CD4-positive, alpha-beta T cell (primary cell): ENCODE measurements at regions of chr4 and their contacts with region 1.

Region 1: DNA sequence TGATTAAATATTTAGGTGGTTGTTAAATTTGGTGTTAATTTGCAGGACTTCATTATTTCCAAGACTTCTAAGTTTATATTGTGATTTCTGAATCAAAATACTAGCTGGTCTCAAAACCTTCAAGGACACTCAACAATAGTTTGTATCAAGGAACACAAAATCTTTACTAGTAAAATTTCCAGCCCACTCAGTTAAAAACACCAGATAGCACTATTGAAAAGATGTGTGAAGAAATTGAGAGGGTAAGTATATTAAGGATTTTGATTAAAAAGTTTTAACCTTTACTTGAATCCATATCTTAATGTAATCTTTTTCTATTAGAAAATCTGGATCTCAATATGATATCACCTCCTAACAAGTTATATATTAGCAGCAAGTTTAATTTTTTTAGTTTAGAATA is 89.3 kb upstream of the UGT8 start:
- DNase-seq: no peak
- ATAC-seq: no peak
- H3K4me3 ChIP-seq: no peak overlapping the region
- H3K4me3 Mint-ChIP-seq: no peak overlapping the region
- H3K27ac ChIP-seq: no peak overlapping the region
- H3K27ac Mint-ChIP-seq: no peak overlapping the region
- H3K4me1 ChIP-seq: no peaks in the 10 kb centered on the region
- H3K4me1 Mint-ChIP-seq: no peaks in the 10 kb centered on the region
- H3K27me3 ChIP-seq: no peaks in the 10 kb centered on the region
- H3K27me3 Mint-ChIP-seq: peaks cover 15% of the 10 kb centered on the region
- CTCF ChIP-seq: no peak

Region 2: DNA sequence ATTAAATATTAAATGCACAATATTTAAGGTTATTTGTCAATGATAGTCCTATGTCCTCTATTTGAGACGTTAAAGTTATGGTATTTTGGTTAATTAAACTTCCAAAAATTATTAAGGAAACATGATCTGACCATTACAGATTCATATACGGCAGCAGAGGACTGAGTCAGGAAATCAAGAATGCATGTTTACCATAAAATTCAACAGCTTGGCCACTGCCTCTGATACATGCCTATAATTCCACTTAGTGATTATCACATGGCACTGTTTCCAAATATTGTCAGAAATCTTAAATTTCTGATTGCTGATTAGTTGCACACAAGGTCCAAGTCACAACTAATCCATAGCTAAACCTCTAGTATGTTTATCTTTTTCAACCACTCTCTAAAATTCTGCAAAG is 143.0 kb before region 1 on chr4:
- CTCF ChIA-PET with region 1: no interaction called
- POLR2A ChIA-PET with region 1: no interaction called
- intact Hi-C with region 1: no loop called
- DNase-seq: no peak
- ATAC-seq: no peak
- H3K4me3 ChIP-seq: no peak overlapping the region
- H3K4me3 Mint-ChIP-seq: no peak overlapping the region
- H3K27ac ChIP-seq: no peak overlapping the region
- H3K27ac Mint-ChIP-seq: no peak overlapping the region
- H3K4me1 ChIP-seq: no peaks in the 10 kb centered on the region
- H3K4me1 Mint-ChIP-seq: no peaks in the 10 kb centered on the region
- H3K27me3 ChIP-seq: no peaks in the 10 kb centered on the region
- H3K27me3 Mint-ChIP-seq: peaks cover 9% of the 10 kb centered on the region
- CTCF ChIP-seq: no peak

Region 3: DNA sequence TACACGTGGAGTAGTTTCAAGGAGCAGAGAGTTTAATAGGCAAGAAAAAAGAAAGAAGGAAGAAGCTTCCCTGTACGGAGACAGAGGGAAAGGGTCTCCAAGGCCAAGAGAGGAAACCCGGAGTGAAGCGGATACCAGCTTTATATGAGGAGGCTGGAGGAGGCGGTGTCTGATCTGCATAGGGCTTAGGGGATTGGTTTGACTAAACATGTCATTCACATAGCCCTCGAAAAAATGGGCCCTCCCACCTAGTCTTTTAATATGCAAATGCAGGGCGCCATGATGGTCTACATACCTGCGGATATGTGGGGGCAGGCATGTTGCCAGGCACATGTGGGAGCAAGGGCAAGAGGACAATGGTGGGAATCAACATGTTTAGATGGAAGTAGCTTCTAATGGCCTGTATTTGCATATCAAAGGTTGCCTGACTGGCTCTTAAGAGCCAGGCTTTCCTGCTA is 13.8 kb before region 1 on chr4:
- CTCF ChIA-PET with region 1: no interaction called
- POLR2A ChIA-PET with region 1: no interaction called
- intact Hi-C with region 1: loop called in 1 of 2 experiments (anchors 1 kb)
- DNase-seq: no peak
- ATAC-seq: no peak
- H3K4me3 ChIP-seq: no peak overlapping the region
- H3K4me3 Mint-ChIP-seq: no peak overlapping the region
- H3K27ac ChIP-seq: no peak overlapping the region
- H3K27ac Mint-ChIP-seq: no peak overlapping the region
- H3K4me1 ChIP-seq: no peaks in the 10 kb centered on the region
- H3K4me1 Mint-ChIP-seq: no peaks in the 10 kb centered on the region
- H3K27me3 ChIP-seq: no peaks in the 10 kb centered on the region
- H3K27me3 Mint-ChIP-seq: no peaks in the 10 kb centered on the region
- CTCF ChIP-seq: no peak

Region 4: GRCh38 chr4:115259642-115260041 is 750.3 kb after region 1 on chr4:
- CTCF ChIA-PET with region 1: no interaction called
- POLR2A ChIA-PET with region 1: no interaction called
- intact Hi-C with region 1: no loop called
- DNase-seq: no peak
- ATAC-seq: no peak
- H3K4me3 ChIP-seq: no peak overlapping the region
- H3K4me3 Mint-ChIP-seq: no peak overlapping the region
- H3K27ac ChIP-seq: no peak overlapping the region
- H3K27ac Mint-ChIP-seq: no peak overlapping the region
- H3K4me1 ChIP-seq: no peaks in the 10 kb centered on the region
- H3K4me1 Mint-ChIP-seq: no peaks in the 10 kb centered on the region
- H3K27me3 ChIP-seq: no peaks in the 10 kb centered on the region
- H3K27me3 Mint-ChIP-seq: no peaks in the 10 kb centered on the region
- CTCF ChIP-seq: no peak